Psoas muscle (tissue), 8 donors: ENCODE measurements at regions of chr11 and their contacts with region 1.

Region 1: GRCh38 chr11:33747979-33748378 is 11.8 kb upstream of the CD59 start:
- DNase-seq: no peak
- ATAC-seq: no peak
- H3K4me3 ChIP-seq: no peak overlapping the region
- H3K27ac ChIP-seq: peak overlapping the region; percentile 58
- H3K4me1 ChIP-seq: peaks cover 29% of the 10 kb centered on the region
- H3K27me3 ChIP-seq: no peaks in the 10 kb centered on the region
- CTCF ChIP-seq: no peak

Region 2: GRCh38 chr11:33716236-33716635 is 31.7 kb before region 1 on chr11:
- intact Hi-C with region 1: loop called in 1 of 2 experiments (anchors 5 kb)
- DNase-seq: no peak
- ATAC-seq: peak in 3 of 4 donors; percentile 41 to 72 (median 53)
- H3K4me3 ChIP-seq: no peak overlapping the region
- H3K27ac ChIP-seq: peak overlapping the region; percentile 23
- H3K4me1 ChIP-seq: peaks cover 53% of the 10 kb centered on the region
- H3K27me3 ChIP-seq: no peaks in the 10 kb centered on the region
- CTCF ChIP-seq: peak; percentile 55